GM12878 (cell line): ENCODE measurements at regions of chr10 and their contacts with region 1.

Region 1: DNA sequence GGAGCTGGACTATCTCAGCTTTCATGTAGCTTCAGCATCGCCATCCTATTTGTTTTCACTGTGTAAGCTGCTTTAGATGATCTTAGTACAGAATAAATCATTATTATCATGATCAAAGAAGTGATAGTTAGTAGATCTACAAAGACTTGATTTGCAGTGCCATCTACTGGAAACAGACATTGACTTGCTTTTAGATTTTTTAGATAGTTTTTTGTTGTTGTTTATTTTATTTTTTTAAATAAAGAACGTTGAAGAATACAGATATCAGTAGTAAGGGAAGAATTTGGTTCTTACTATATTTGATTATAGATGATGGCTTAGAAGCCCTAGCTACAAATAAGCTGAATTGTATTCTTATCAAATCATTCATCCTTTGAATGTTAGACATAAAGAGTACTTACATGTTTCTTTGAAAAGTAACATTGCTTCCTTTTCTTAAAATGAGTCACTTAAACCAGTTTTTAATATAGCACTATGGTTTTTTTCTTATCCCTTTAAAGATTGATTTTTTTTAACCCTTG is 6.3 kb upstream of the SFMBT2 start:
- DNase-seq: no peak
- ATAC-seq: peak; percentile 40
- H3K4me3 ChIP-seq: no peak overlapping the region
- H3K27ac ChIP-seq: no peak overlapping the region
- H3K4me1 ChIP-seq: peaks cover 13% of the 10 kb centered on the region
- H3K27me3 ChIP-seq: no peaks in the 10 kb centered on the region
- CTCF ChIP-seq: peak; percentile 25 to 61 (median 53); a peak in 4 of 6 replicates
- EP300 ChIP-seq: no peak
- POLR2A ChIP-seq: no peak
- RAD21 ChIP-seq: peak; percentile 67

Region 2: GRCh38 chr10:6912424-6912823 is 504.7 kb before region 1 on chr10:
- CTCF ChIA-PET with region 1: interaction called, 3 read pairs
- POLR2A ChIA-PET with region 1: no interaction called
- RAD21 ChIA-PET with region 1: no interaction called
- SMC1A ChIA-PET with region 1: no interaction called
- in situ Hi-C with region 1: loop called (anchors 5 kb)
- intact Hi-C with region 1: no loop called
- DNase-seq: no peak
- ATAC-seq: peak; percentile 54
- H3K4me3 ChIP-seq: no peak overlapping the region
- H3K27ac ChIP-seq: no peak overlapping the region
- H3K4me1 ChIP-seq: peaks cover 17% of the 10 kb centered on the region
- H3K27me3 ChIP-seq: peaks cover 0 to 4% of the 10 kb centered on the region in 2 experiments; a peak in 1 of 4 replicates
- CTCF ChIP-seq: no peak
- EP300 ChIP-seq: no peak
- POLR2A ChIP-seq: no peak
- RAD21 ChIP-seq: no peak

Region 3: GRCh38 chr10:7121154-7121810 is 295.9 kb before region 1 on chr10:
- CTCF ChIA-PET with region 1: interaction called, 33 read pairs
- POLR2A ChIA-PET with region 1: no interaction called
- RAD21 ChIA-PET with region 1: interaction called, 17 read pairs
- SMC1A ChIA-PET with region 1: interaction called, 19 read pairs
- in situ Hi-C with region 1: loop called (anchors 5 kb)
- intact Hi-C with region 1: no loop called
- DNase-seq: no peak
- ATAC-seq: peak; percentile 91
- H3K4me3 ChIP-seq: no peak overlapping the region
- H3K27ac ChIP-seq: no peak overlapping the region
- H3K4me1 ChIP-seq: no peaks in the 10 kb centered on the region
- H3K27me3 ChIP-seq: no peaks in the 10 kb centered on the region; a peak in 1 of 4 replicates
- CTCF ChIP-seq: peak; percentile 81 to 82 (median 82)
- EP300 ChIP-seq: no peak
- POLR2A ChIP-seq: no peak
- RAD21 ChIP-seq: peak; percentile 84

Region 4: GRCh38 chr10:7260412-7260900 is 156.7 kb before region 1 on chr10:
- CTCF ChIA-PET with region 1: interaction called, 17 read pairs
- POLR2A ChIA-PET with region 1: no interaction called
- RAD21 ChIA-PET with region 1: interaction called, 12 read pairs
- SMC1A ChIA-PET with region 1: interaction called, 3 read pairs
- in situ Hi-C with region 1: no loop called
- intact Hi-C with region 1: loop called (anchors 1 kb)
- DNase-seq: peak; percentile 30
- ATAC-seq: peak; percentile 91
- H3K4me3 ChIP-seq: no peak overlapping the region
- H3K27ac ChIP-seq: no peak overlapping the region
- H3K4me1 ChIP-seq: peaks cover 22% of the 10 kb centered on the region
- H3K27me3 ChIP-seq: no peaks in the 10 kb centered on the region
- CTCF ChIP-seq: peak; percentile 60 to 65 (median 63)
- EP300 ChIP-seq: no peak
- POLR2A ChIP-seq: no peak
- RAD21 ChIP-seq: peak; percentile 76